ENCODE measurements at regions of chr3 and their contacts with region 1.

Region 1: DNA sequence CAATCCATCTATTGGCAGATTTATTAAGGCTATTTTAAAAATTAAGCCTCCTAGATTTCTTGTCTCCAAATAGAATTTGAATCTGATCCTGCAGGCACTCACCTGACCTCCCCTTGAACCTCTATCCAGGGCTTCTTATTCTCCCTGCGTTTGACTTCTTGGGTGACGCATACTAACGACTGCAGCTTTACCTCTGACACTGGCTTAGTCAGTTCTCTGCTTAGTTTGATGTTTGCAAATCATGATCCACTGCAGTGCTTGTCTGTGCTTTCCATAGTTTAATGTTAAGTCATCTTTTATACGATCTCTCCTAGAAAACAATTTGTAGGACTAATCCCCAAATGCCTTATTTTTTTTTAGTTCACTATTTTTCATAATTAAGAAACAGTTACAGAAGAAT is 233.1 kb downstream of the ROBO1 start:
- DNase-seq: no peak
- ATAC-seq: no peak
- H3K4me3 ChIP-seq: no peak overlapping the region
- H3K27ac ChIP-seq: no peak overlapping the region
- H3K4me1 ChIP-seq: no peaks in the 10 kb centered on the region
- H3K27me3 ChIP-seq: no peaks in the 10 kb centered on the region
- CTCF ChIP-seq: no peak
- EP300 ChIP-seq: no peak
- POLR2A ChIP-seq: no peak
- RAD21 ChIP-seq: no peak

Region 2: DNA sequence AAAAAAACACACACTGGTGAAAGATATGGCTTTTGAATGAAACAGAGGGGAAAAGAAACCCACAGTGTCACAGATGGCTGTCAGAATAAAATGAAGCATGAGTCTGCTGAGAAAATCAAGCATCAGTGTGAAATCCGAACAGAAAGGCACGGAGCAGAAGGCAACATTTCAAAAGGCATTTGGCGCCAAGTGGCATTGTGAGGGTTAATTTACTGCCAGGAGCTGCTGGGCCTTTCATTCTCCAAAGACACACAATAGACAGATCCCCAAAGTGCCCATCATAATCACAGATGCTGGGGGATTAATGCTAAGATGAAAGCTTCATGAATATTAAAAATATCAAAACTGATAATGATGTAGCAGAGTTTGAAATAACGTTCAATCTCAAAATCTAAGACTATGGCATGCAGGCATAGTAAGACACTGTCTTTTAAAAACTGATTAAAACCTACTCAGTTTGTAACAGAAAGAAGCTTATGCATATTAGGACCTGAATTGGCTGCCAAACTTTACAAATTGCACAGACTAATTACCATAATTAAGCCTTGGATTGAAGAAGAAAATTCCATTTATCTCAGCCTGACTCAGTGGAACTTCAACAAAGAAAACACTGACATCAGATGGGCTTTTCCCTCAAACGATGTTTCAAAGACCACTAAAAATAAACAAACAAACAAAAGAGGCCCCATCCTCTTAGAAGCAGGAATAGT is 356.1 kb before region 1 on chr3:
- CTCF ChIA-PET with region 1: no interaction called
- POLR2A ChIA-PET with region 1: no interaction called
- in situ Hi-C with region 1: no loop called
- intact Hi-C with region 1: no loop called
- DNase-seq: no peak
- ATAC-seq: no peak
- H3K4me3 ChIP-seq: no peak overlapping the region
- H3K27ac ChIP-seq: no peak overlapping the region
- H3K4me1 ChIP-seq: no peaks in the 10 kb centered on the region
- H3K27me3 ChIP-seq: no peaks in the 10 kb centered on the region
- CTCF ChIP-seq: no peak
- EP300 ChIP-seq: no peak
- POLR2A ChIP-seq: no peak
- RAD21 ChIP-seq: no peak

Region 3: DNA sequence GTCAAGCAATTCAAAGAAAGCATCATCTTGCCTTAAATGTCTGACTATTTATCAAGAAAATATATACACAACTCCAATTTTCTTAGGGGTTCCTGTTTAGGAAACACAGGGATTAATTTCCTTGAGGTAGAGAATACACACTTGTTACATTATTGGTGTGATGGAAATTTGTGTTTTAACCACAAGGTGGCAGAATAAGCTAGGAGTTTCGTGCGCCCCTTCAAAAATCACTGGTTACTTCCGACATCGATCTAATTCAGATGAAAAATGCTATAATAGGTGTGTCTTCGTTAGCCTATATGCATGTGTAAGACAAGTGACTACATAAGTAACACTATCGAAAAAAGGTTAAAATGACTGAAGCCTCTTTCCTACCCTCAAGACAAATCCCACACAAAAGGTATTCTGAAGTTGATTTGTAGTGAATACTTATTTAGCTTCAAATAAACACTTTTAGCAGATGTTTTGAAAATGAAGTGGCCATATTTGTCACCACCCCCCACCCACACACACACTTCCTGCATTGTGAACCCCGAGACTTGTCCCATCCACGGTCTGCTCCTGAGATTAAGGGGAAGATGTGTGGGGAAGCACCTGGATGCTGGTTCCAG is 13.4 kb before region 1 on chr3:
- CTCF ChIA-PET with region 1: no interaction called
- POLR2A ChIA-PET with region 1: no interaction called
- in situ Hi-C with region 1: no loop called
- intact Hi-C with region 1: no loop called
- DNase-seq: peak; percentile 3 to 15 (median 6)
- ATAC-seq: no peak
- H3K4me3 ChIP-seq: no peak overlapping the region
- H3K27ac ChIP-seq: no peak overlapping the region
- H3K4me1 ChIP-seq: no peaks in the 10 kb centered on the region
- H3K27me3 ChIP-seq: no peaks in the 10 kb centered on the region
- CTCF ChIP-seq: peak in 2 of 3 experiments; percentile 10 to 46; a peak in 3 of 6 replicates
- EP300 ChIP-seq: no peak
- POLR2A ChIP-seq: no peak
- RAD21 ChIP-seq: peak; percentile 36 to 65; a peak in 3 of 4 replicates

Region 4: DNA sequence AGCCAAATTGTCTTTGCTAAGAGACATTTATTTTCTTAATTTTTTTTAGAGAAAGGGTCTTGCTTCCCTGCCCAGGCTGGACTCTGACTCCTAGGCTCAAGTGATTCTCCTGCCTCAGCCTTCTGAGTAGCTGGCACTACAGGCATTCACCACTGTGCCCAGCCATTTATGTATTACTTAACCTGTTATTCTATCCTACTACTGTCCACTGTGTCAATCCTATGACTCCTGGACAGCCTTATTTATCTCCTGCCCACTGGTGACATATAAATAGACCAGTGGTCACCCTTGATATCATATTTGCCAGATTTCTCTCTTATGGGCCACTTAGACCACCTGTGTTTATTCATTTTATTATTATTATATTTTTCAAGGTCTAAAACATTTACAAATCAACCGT is 71.7 kb after region 1 on chr3:
- CTCF ChIA-PET with region 1: no interaction called
- POLR2A ChIA-PET with region 1: no interaction called
- in situ Hi-C with region 1: no loop called
- intact Hi-C with region 1: no loop called
- DNase-seq: no peak
- ATAC-seq: no peak
- H3K4me3 ChIP-seq: no peak overlapping the region
- H3K27ac ChIP-seq: no peak overlapping the region
- H3K4me1 ChIP-seq: no peaks in the 10 kb centered on the region
- H3K27me3 ChIP-seq: no peaks in the 10 kb centered on the region
- CTCF ChIP-seq: no peak
- EP300 ChIP-seq: no peak
- POLR2A ChIP-seq: no peak
- RAD21 ChIP-seq: no peak

Region 5: GRCh38 chr3:81500039-81500438 is 1965.3 kb after region 1 on chr3:
- CTCF ChIA-PET with region 1: no interaction called
- POLR2A ChIA-PET with region 1: no interaction called
- in situ Hi-C with region 1: loop called (anchors 10 kb)
- intact Hi-C with region 1: no loop called
- DNase-seq: no peak
- ATAC-seq: no peak
- H3K4me3 ChIP-seq: no peak overlapping the region
- H3K27ac ChIP-seq: no peak overlapping the region
- H3K4me1 ChIP-seq: no peaks in the 10 kb centered on the region
- H3K27me3 ChIP-seq: no peaks in the 10 kb centered on the region
- CTCF ChIP-seq: no peak
- EP300 ChIP-seq: no peak
- POLR2A ChIP-seq: no peak
- RAD21 ChIP-seq: no peak

Measured in K562 (cell line).